A673 (cell line): ENCODE measurements at regions of chr3 and their contacts with region 1.

Region 1: GRCh38 chr3:115169808-115170207 is 22.7 kb upstream of the ZBTB20 start:
- DNase-seq: no peak
- H3K4me3 ChIP-seq: no peak overlapping the region
- H3K27ac ChIP-seq: no peak overlapping the region
- H3K4me1 ChIP-seq: no peaks in the 10 kb centered on the region
- H3K27me3 ChIP-seq: no peaks in the 10 kb centered on the region
- CTCF ChIP-seq: no peak; the same call in 1 of the 2 replicates

Region 2: DNA sequence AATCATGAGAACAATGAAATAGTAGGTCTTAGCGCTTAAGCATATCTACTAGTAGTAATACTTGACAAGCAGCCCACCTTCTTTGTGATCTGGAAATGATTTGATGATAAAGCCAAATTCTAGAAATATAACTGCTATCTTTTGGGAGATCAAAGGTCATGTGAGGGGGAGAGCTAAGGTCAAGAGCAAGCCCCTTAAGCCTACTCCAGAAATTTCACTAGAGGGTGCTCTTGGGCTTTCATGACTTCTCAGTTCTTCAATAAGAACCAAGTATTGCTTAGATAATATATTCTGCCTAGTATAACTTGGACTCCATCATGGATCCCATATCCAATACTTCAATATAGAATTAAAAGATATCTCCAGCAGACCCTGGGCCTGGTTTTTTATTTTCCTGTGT is 342.3 kb before region 1 on chr3:
- CTCF ChIA-PET with region 1: no interaction called
- POLR2A ChIA-PET with region 1: no interaction called
- intact Hi-C with region 1: loop called (anchors 2 kb)
- DNase-seq: peak; percentile 61
- H3K4me3 ChIP-seq: no peak overlapping the region
- H3K27ac ChIP-seq: no peak overlapping the region
- H3K4me1 ChIP-seq: no peaks in the 10 kb centered on the region
- H3K27me3 ChIP-seq: no peaks in the 10 kb centered on the region
- CTCF ChIP-seq: peak; percentile 64

Region 3: DNA sequence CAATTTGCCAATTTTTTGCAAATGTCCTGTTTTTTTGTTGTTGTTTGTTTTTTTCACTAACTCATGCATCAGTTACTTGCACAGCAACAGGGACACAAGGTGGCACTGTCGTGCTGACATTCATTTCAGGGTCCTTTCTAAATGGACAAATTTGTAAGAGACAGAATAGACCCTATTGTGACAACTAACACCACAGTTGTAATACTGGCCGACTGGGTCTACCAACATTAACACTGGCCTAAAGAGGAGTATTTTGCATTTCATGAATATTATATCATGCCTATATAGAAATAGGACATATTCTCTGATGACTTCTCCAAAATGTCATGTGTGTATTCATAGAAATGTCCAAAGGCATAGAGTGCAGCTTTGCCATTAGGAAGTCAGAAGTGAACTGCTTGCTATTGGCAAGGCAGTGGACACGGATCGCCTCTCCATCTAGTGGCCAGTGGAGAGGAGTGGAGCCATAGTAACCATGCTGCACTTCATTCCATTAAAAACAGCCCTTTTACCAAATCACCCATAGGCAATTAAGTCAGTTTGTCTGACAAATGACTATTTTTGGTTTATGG is 77.5 kb before region 1 on chr3:
- CTCF ChIA-PET with region 1: no interaction called
- POLR2A ChIA-PET with region 1: no interaction called
- intact Hi-C with region 1: loop called (anchors 2 kb)
- DNase-seq: peak; percentile 76
- H3K4me3 ChIP-seq: no peak overlapping the region
- H3K27ac ChIP-seq: no peak overlapping the region
- H3K4me1 ChIP-seq: no peaks in the 10 kb centered on the region
- H3K27me3 ChIP-seq: no peaks in the 10 kb centered on the region
- CTCF ChIP-seq: peak; percentile 77

Region 4: DNA sequence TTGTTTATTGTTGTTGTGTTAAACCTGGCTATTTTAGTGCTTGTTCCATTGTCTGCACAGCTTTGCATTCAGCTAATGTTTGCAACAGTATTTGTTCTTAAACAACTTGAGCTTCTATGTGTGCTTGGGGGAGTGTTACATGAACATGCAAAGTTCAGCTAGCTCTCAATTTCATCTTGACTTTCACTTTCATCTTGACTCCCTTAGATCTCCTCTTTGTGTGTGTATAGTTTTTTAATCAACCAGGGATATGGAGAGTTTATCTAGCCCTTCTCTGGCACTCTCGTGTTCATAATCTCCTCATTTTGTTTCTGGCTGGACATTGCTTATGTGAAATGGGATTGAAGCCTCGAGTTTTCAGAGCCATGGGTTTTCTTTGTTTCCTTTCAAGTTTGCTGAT is 189.7 kb after region 1 on chr3:
- CTCF ChIA-PET with region 1: no interaction called
- POLR2A ChIA-PET with region 1: interaction called, 13 read pairs
- intact Hi-C with region 1: no loop called
- DNase-seq: no peak
- H3K4me3 ChIP-seq: no peak overlapping the region
- H3K27ac ChIP-seq: no peak overlapping the region
- H3K4me1 ChIP-seq: no peaks in the 10 kb centered on the region
- H3K27me3 ChIP-seq: no peaks in the 10 kb centered on the region
- CTCF ChIP-seq: no peak